MCF 10A (cell line): ENCODE measurements at regions of chr5 and their contacts with region 1.

Region 1: GRCh38 chr5:55850839-55851674 is at the start of gene IL31RA:
- DNase-seq: peak; percentile 87
- H3K4me3 Mint-ChIP-seq: peak within 1 kb of the TSS; percentile 75
- H3K27ac Mint-ChIP-seq: peak within 1 kb of the TSS; percentile 98
- H3K4me1 Mint-ChIP-seq: peaks cover 37% of the 10 kb centered on the region
- H3K27me3 Mint-ChIP-seq: no peaks in the 10 kb centered on the region
- CTCF ChIP-seq: no peak
- total RNA-seq, gene IL31RA: 5.8 and 6.4 TPM in 2 replicates

Region 2: DNA sequence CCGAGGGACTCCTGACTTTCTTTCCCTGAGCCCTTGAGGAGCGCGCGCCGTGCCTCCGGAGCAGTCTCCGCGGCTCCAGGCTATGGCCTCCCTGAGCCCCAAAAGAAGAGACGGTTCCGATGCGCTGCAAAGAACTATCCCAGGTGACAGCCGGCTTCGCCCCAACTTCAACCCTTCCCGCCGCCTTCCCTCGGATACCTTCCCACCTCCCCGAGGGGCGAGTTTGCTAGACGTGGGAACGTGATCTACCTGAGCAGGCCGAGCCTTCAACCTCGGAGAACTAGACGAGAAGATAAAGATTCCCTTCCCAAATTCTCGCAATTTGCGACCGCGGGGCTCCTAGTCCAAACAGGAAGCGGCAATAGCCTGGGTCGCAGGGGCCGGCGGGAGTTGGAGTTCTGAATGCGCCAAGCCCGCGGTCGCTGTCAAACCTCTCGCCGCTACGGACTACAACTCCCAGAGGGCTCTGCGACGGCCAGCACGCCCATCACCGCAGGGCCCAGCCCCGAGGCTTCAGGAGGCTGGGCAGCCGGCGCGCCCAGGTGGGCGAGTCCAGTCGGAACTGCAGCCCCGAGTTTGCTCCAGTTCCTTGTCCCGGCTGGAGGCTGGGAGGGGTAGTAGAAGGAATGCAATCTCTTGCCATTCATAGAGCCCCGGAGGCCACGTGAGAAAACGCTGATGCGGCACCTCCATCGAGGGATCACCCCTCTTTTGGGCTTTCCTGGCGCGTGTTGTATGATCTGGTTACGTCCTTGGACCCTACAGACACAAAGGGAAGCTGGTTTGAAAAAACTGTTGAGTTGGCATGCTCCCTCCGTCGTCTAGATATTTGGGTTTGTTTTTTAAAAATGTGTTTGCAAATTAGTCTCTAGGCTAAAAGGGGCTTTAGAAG is 138.8 kb before region 1 on chr5 and contains the start of gene SLC38A9:
- CTCF ChIA-PET with region 1: interaction called, 3 read pairs
- POLR2A ChIA-PET with region 1: interaction called, 6 read pairs
- intact Hi-C with region 1: loop called (anchors 2 kb)
- DNase-seq: peak; percentile 93
- H3K4me3 Mint-ChIP-seq: peak within 1 kb of the TSS; percentile 98
- H3K27ac Mint-ChIP-seq: peak within 1 kb of the TSS; percentile 99
- H3K4me1 Mint-ChIP-seq: peaks cover 5% of the 10 kb centered on the region
- H3K27me3 Mint-ChIP-seq: no peaks in the 10 kb centered on the region
- CTCF ChIP-seq: no peak
- total RNA-seq, gene SLC38A9: 20.1 and 25.6 TPM in 2 replicates

Region 3: GRCh38 chr5:55868846-55869245 is 17.8 kb after region 1 on chr5:
- CTCF ChIA-PET with region 1: interaction called, 4 read pairs
- POLR2A ChIA-PET with region 1: interaction called, 26 read pairs
- intact Hi-C with region 1: no loop called
- DNase-seq: peak; percentile 95
- H3K4me3 Mint-ChIP-seq: no peak overlapping the region
- H3K27ac Mint-ChIP-seq: peak overlapping the region; percentile 52
- H3K4me1 Mint-ChIP-seq: peaks cover 6% of the 10 kb centered on the region
- H3K27me3 Mint-ChIP-seq: no peaks in the 10 kb centered on the region
- CTCF ChIP-seq: no peak

Region 4: DNA sequence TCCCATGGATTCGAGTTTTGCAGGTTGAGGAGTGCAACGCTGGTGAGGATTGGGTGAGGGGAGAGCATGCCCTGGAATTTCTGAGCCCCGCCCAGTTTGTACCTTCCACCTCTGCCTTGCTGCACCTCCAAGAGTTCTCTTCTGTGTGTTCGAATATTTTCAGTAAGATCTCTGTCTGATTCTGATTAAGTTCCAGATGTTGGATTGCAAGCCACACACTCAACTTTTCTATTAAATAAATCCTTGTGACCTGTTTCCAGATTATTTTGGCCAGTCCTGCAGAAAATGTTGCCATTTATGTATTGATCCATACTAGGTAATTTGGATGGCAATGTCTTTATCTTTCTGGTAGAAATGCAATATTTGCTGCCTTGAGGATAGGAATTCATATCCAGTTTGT is 54.2 kb after region 1 on chr5:
- CTCF ChIA-PET with region 1: no interaction called
- POLR2A ChIA-PET with region 1: no interaction called
- intact Hi-C with region 1: no loop called
- DNase-seq: no peak
- H3K4me3 Mint-ChIP-seq: no peak overlapping the region
- H3K27ac Mint-ChIP-seq: no peak overlapping the region
- H3K4me1 Mint-ChIP-seq: no peaks in the 10 kb centered on the region
- H3K27me3 Mint-ChIP-seq: no peaks in the 10 kb centered on the region
- CTCF ChIP-seq: no peak